Activated CD4-positive, alpha-beta T cell treated with anti-CD3 and anti-CD28 coated beads for 36 hours (primary cell): ENCODE measurements at regions of chr11 and their contacts with region 1.

Region 1: DNA sequence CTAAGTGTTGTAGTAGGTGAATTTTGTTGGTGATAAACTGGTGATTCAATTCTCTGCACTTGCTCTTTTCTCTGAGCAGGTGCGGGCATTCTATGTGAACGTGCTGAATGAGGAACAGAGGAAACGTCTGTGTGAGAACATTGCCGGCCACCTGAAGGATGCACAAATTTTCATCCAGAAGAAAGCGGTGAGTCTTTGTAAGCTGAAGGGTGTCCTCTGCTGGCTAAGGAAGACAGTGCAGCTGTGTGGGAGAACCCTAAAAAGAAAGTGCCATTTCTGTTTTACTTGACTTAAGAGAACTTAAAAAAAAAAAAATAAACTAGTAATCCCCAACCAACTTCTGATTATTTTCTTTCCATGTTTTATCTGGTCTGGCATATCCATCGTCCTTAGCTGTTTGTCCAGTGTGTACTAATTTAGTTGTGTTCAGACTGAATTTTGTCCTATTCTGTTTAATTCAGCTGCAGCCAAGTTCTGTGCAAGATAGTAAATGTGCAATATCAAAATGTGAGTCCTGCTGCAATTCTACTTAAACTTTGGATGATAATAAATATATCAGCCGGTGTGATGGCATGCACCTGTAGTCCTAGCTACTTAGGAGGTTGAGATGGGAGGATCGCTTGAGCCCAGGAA is 29.6 kb downstream of the CAT start:
- DNase-seq: peak; percentile 68
- ATAC-seq: peak; percentile 66
- H3K4me3 Mint-ChIP-seq: no peak overlapping the region
- H3K27ac Mint-ChIP-seq: no peak overlapping the region
- H3K4me1 Mint-ChIP-seq: peaks cover 4% of the 10 kb centered on the region
- H3K27me3 Mint-ChIP-seq: no peaks in the 10 kb centered on the region

Region 2: GRCh38 chr11:34449013-34449412 is 19.3 kb before region 1 on chr11:
- CTCF ChIA-PET with region 1: interaction called, 17 read pairs
- POLR2A ChIA-PET with region 1: no interaction called
- intact Hi-C with region 1: no loop called
- DNase-seq: peak; percentile 16
- ATAC-seq: peak; percentile 39
- H3K4me3 Mint-ChIP-seq: no peak overlapping the region
- H3K27ac Mint-ChIP-seq: no peak overlapping the region
- H3K4me1 Mint-ChIP-seq: peaks cover 25% of the 10 kb centered on the region
- H3K27me3 Mint-ChIP-seq: no peaks in the 10 kb centered on the region